CD8-positive, alpha-beta T cell (primary cell): ENCODE measurements at regions of chr17 and their contacts with region 1.

Region 1: GRCh38 chr17:77881545-77881944 is 77.0 kb upstream of the TNRC6C start:
- DNase-seq: peak; percentile 57 to 93 (median 76)
- ATAC-seq: peak; percentile 13
- H3K4me3 ChIP-seq: peak overlapping the region; percentile 44
- H3K4me3 Mint-ChIP-seq: peak overlapping the region; percentile 79
- H3K27ac ChIP-seq: peak overlapping the region; percentile 80 to 98
- H3K27ac Mint-ChIP-seq: peak overlapping the region; percentile 98
- H3K4me1 ChIP-seq: peaks cover 83% of the 10 kb centered on the region
- H3K4me1 Mint-ChIP-seq: peaks cover 92% of the 10 kb centered on the region
- H3K27me3 ChIP-seq: no peaks in the 10 kb centered on the region
- H3K27me3 Mint-ChIP-seq: no peaks in the 10 kb centered on the region
- CTCF ChIP-seq: no peak

Region 2: DNA sequence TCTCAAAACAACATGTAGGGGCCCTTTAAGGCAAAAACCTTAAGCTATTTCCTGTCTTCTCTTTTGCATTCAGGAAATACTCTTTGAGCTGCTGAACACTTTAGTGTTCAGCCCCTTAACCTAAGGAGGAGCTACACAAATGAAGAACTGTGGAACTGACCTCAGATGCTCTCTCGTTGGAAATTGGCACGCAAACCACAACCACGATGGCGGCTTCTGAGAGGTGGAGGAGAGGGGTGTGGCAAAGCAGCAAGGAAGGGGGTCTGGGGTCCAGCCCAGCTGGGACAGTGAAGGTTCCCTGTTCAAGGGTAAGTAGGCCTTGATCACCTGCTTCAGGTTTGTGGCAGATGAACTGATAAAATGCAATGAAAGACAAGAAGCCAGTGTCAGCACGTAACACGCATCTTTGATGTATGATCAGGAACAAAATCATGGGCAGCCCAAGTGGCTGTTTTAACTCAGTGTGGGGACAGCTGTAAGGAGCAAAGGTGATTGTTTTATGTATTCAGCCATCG is 214.6 kb before region 1 on chr17:
- CTCF ChIA-PET with region 1: no interaction called
- POLR2A ChIA-PET with region 1: interaction called, 3 read pairs
- intact Hi-C with region 1: loop called in 1 of 2 experiments (anchors 5 kb)
- DNase-seq: peak; percentile 33 to 91 (median 71)
- ATAC-seq: peak; percentile 89
- H3K4me3 ChIP-seq: peak overlapping the region; percentile 47 to 53
- H3K4me3 Mint-ChIP-seq: peak overlapping the region; percentile 83
- H3K27ac ChIP-seq: peak overlapping the region; percentile 61 to 87
- H3K27ac Mint-ChIP-seq: peak overlapping the region; percentile 97
- H3K4me1 ChIP-seq: peaks cover 33% of the 10 kb centered on the region
- H3K4me1 Mint-ChIP-seq: peaks cover 58% of the 10 kb centered on the region
- H3K27me3 ChIP-seq: no peaks in the 10 kb centered on the region
- H3K27me3 Mint-ChIP-seq: no peaks in the 10 kb centered on the region
- CTCF ChIP-seq: no peak

Region 3: GRCh38 chr17:77783991-77784820 is 97.3 kb before region 1 on chr17:
- CTCF ChIA-PET with region 1: interaction called, 3 read pairs
- POLR2A ChIA-PET with region 1: interaction called, 9 read pairs
- intact Hi-C with region 1: loop called in 1 of 2 experiments (anchors 1 kb)
- DNase-seq: peak; percentile 54 to 95 (median 70)
- ATAC-seq: peak; percentile 89
- H3K4me3 ChIP-seq: peak overlapping the region in 1 of 2 experiments; percentile 14
- H3K4me3 Mint-ChIP-seq: peak overlapping the region; percentile 60
- H3K27ac ChIP-seq: peak overlapping the region; percentile 65 to 89
- H3K27ac Mint-ChIP-seq: peak overlapping the region; percentile 94
- H3K4me1 ChIP-seq: peaks cover 15% of the 10 kb centered on the region
- H3K4me1 Mint-ChIP-seq: peaks cover 23% of the 10 kb centered on the region
- H3K27me3 ChIP-seq: no peaks in the 10 kb centered on the region
- H3K27me3 Mint-ChIP-seq: no peaks in the 10 kb centered on the region
- CTCF ChIP-seq: no peak

Region 4: GRCh38 chr17:77842528-77843147 is 38.9 kb before region 1 on chr17:
- CTCF ChIA-PET with region 1: no interaction called
- POLR2A ChIA-PET with region 1: interaction called, 10 read pairs
- intact Hi-C with region 1: loop called (anchors 1 kb)
- DNase-seq: peak in 1 of 9 experiments; percentile 36
- ATAC-seq: no peak
- H3K4me3 ChIP-seq: no peak overlapping the region
- H3K4me3 Mint-ChIP-seq: no peak overlapping the region
- H3K27ac ChIP-seq: peak overlapping the region in 1 of 2 experiments; percentile 25
- H3K27ac Mint-ChIP-seq: peak overlapping the region; percentile 93
- H3K4me1 ChIP-seq: peaks cover 53% of the 10 kb centered on the region
- H3K4me1 Mint-ChIP-seq: peaks cover 64% of the 10 kb centered on the region
- H3K27me3 ChIP-seq: no peaks in the 10 kb centered on the region
- H3K27me3 Mint-ChIP-seq: no peaks in the 10 kb centered on the region
- CTCF ChIP-seq: no peak

Region 5: DNA sequence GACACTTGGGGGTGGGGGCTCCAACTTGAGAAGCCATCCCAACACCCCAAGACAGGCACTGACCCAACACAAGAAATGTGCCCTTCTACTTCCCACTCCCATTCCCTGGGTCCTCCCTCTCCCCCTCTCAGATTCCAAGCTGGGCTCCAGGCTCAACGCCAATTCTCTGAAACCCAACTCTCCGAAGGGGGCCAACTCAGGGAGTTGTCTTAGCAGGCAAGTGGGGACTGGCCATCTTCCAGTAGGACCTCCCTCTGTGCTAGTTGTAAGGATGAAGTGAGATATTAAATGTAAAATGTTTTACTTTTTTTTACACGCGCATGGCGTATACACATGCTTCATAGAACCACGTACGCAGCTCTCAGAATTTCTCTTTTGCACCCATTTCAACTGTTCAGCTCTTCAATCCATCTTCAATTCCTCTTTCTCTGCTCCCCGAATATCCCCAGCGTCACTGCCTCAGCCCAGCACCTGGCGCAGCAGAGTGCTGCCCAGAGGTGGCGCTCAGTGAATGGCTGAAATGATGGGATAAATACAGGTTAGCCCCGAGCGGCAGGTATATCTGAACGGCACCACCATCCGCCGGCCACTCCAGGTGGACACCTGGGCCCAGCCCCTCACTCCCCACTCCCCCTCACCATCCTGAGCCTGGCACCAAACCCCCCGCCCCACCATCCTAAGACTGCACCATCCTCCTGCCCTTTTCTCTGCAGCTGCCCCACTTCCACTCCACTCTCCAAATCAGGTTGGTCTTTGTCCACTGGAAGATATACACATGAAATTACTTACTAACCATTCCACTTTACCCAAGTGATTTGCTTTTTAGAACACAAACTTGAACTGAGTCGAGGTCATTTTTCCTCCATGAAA is 33.1 kb after region 1 on chr17:
- CTCF ChIA-PET with region 1: no interaction called
- POLR2A ChIA-PET with region 1: no interaction called
- intact Hi-C with region 1: no loop called
- DNase-seq: peak in 1 of 9 experiments; percentile 31
- ATAC-seq: no peak
- H3K4me3 ChIP-seq: no peak overlapping the region
- H3K4me3 Mint-ChIP-seq: no peak overlapping the region
- H3K27ac ChIP-seq: no peak overlapping the region
- H3K27ac Mint-ChIP-seq: no peak overlapping the region
- H3K4me1 ChIP-seq: peaks cover 8% of the 10 kb centered on the region
- H3K4me1 Mint-ChIP-seq: peaks cover 17% of the 10 kb centered on the region
- H3K27me3 ChIP-seq: peaks cover 4 to 5% of the 10 kb centered on the region in 2 experiments
- H3K27me3 Mint-ChIP-seq: peaks cover 29% of the 10 kb centered on the region
- CTCF ChIP-seq: no peak